T-cell (primary cell): ENCODE measurements at regions of chr7 and their contacts with region 1.

Region 1: GRCh38 chr7:128961027-128961659 is 23.4 kb downstream of the IRF5 start:
- DNase-seq: no peak
- ATAC-seq: no peak
- H3K4me3 ChIP-seq: no peak overlapping the region
- H3K4me3 Mint-ChIP-seq: no peak overlapping the region
- H3K27ac ChIP-seq: no peak overlapping the region
- H3K27ac Mint-ChIP-seq: no peak overlapping the region
- H3K4me1 ChIP-seq: no peaks in the 10 kb centered on the region
- H3K4me1 Mint-ChIP-seq: peaks cover 0 to 15% (median 6%) of the 10 kb centered on the region in 3 donors
- H3K27me3 ChIP-seq: no peaks in the 10 kb centered on the region
- H3K27me3 Mint-ChIP-seq: no peaks in the 10 kb centered on the region

Region 2: DNA sequence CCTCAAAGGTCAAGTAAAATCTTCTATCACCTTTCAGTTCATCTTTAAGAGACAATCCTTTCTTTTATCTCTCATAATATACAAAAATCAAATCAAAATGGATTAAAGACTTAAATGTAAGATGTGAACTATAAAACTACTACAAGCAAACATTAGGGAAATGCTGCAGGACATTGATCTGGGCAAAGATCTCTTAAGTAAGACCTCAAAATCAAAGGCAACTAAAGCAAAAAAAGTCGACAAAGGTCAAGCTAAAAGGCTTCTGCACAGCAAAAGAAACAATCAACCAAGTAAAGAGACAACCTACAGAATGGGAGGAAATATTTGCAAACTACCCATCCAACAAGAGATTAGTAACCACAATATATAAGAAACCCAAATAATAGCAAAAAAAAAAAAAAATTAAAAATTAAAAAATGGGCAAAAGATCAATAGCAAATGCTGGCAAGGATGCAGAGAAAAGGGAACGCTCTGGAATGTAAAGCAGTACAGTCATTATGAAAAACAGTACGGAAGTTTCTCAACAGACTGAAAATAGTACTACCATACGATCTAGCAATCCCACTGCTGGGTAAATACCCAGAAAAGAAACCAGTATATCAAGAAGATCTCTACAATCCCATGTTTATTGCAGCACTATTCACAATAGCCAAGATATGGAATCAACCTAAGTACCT is 52.0 kb after region 1 on chr7:
- CTCF ChIA-PET with region 1: no interaction called
- POLR2A ChIA-PET with region 1: interaction called in 1 of 2 experiments, 10 read pairs
- DNase-seq: no peak
- ATAC-seq: no peak
- H3K4me3 ChIP-seq: no peak overlapping the region
- H3K4me3 Mint-ChIP-seq: no peak overlapping the region
- H3K27ac ChIP-seq: no peak overlapping the region
- H3K27ac Mint-ChIP-seq: no peak overlapping the region
- H3K4me1 ChIP-seq: no peaks in the 10 kb centered on the region
- H3K4me1 Mint-ChIP-seq: peaks cover 20 to 30% (median 22%) of the 10 kb centered on the region in 3 donors
- H3K27me3 ChIP-seq: no peaks in the 10 kb centered on the region
- H3K27me3 Mint-ChIP-seq: no peaks in the 10 kb centered on the region